ENCODE measurements at regions of chr6 and their contacts with region 1.

Region 1: GRCh38 chr6:54244430-54244829 is 63.8 kb upstream of the TINAG start:
- H3K4me3 ChIP-seq: no peak overlapping the region
- H3K27ac ChIP-seq: no peak overlapping the region
- H3K4me1 ChIP-seq: no peaks in the 10 kb centered on the region
- CTCF ChIP-seq: no peak

Region 2: GRCh38 chr6:54267798-54268197 is 23.4 kb after region 1 on chr6:
- CTCF ChIA-PET with region 1: interaction called, 10 read pairs
- POLR2A ChIA-PET with region 1: no interaction called
- H3K4me3 ChIP-seq: no peak overlapping the region
- H3K27ac ChIP-seq: no peak overlapping the region
- H3K4me1 ChIP-seq: no peaks in the 10 kb centered on the region
- CTCF ChIP-seq: no peak

Region 3: GRCh38 chr6:54609981-54610380 is 365.6 kb after region 1 on chr6:
- CTCF ChIA-PET with region 1: no interaction called
- POLR2A ChIA-PET with region 1: no interaction called
- H3K4me3 ChIP-seq: no peak overlapping the region
- H3K27ac ChIP-seq: no peak overlapping the region
- H3K4me1 ChIP-seq: no peaks in the 10 kb centered on the region
- CTCF ChIP-seq: no peak

Measured in HEK293 (cell line).